ENCODE measurements at regions of chr10 and their contacts with region 1.

Region 1: DNA sequence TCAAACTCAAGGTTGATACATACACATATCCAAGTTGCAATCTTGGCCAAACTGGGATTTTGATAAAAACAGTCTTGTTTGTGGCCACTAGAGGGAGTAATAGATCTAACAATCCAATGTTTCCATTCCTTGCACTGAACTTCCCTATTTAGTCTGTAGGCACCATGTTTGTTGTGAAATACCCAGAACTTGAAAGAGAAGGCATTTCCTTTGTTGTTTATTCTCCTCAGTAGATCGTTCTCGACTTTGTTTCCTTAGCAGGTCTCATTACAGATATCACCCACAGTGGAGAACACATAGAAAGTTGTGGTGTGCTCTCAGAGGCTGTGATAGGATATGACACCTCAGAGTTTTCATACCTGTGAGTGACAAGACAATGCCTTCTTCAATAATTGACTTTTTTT is 70.3 kb upstream of the MXI1 start:
- DNase-seq: peak; percentile 26
- H3K4me3 ChIP-seq: no peak overlapping the region
- H3K27me3 ChIP-seq: no peaks in the 10 kb centered on the region
- CTCF ChIP-seq: peak; percentile 62

Region 2: GRCh38 chr10:110273474-110273873 is 136.3 kb after region 1 on chr10:
- CTCF ChIA-PET with region 1: interaction called, 48 read pairs
- POLR2A ChIA-PET with region 1: no interaction called
- DNase-seq: no peak
- H3K4me3 ChIP-seq: no peak overlapping the region
- H3K27me3 ChIP-seq: no peaks in the 10 kb centered on the region
- CTCF ChIP-seq: no peak

Region 3: DNA sequence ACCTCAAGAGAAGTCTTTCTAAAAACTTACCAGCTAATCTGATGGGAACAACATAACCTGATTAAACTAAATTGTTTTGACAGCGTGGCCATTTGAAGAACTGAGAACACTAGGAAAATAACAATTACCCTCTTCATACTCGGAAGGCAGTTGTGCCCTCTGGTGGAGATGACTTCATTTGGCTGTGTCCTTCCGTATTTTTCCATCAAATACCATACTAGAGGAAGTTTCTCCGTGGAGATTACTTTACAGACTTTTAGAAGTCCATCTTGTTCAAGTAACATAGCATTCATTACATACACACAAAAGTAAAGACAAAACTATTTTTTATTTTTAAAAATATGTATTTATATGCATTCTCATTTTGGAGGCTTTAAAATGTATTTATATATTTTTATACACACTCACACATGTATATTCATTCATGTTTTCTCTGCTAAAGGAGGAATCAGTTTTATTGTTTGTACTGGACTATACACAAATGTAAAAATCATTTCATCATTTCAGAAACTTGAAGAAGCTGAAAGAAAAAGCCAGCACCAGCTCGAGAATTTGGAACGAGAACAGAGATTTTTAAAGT is 142.4 kb after region 1 on chr10:
- CTCF ChIA-PET with region 1: interaction called, 48 read pairs
- POLR2A ChIA-PET with region 1: no interaction called
- DNase-seq: no peak
- H3K4me3 ChIP-seq: no peak overlapping the region
- H3K27me3 ChIP-seq: no peaks in the 10 kb centered on the region
- CTCF ChIP-seq: peak; percentile 71